ENCODE measurements at regions of chr4 and their contacts with region 1.

Region 1: GRCh38 chr4:164779811-164780216 is 25.9 kb downstream of the SMIM31 start:
- DNase-seq: peak; percentile 25
- H3K4me3 Mint-ChIP-seq: no peak overlapping the region
- H3K27ac Mint-ChIP-seq: no peak overlapping the region
- H3K4me1 Mint-ChIP-seq: no peaks in the 10 kb centered on the region
- H3K27me3 Mint-ChIP-seq: no peaks in the 10 kb centered on the region
- CTCF ChIP-seq: peak; percentile 53

Region 2: DNA sequence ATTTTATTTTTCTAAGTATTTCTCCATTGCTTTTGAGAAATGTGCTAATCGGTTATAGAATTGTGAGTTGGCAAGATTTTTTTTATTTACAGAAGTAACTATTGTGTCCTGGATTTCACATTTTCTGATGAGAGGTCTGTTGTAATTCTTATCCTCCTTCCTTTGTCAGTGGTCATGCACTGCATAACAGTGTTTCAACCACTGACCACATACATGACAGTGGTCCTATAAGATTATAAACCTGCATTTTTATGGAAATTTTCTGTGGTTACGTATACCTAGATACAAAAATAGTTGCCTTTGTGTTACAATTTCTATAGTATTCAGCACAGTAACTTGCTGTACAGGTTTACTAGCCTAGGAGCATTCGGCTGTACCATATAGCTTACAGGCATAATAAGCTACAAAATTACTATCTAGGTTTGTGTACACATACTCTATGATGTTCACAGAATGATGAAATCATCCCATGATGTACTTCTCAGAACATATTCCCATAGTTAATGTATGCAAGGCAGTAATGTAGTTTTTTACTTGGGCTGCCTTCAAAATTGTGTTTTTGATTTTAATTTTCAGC is 144.9 kb after region 1 on chr4:
- CTCF ChIA-PET with region 1: no interaction called
- intact Hi-C with region 1: no loop called
- DNase-seq: no peak
- H3K4me3 Mint-ChIP-seq: no peak overlapping the region
- H3K27ac Mint-ChIP-seq: no peak overlapping the region
- H3K4me1 Mint-ChIP-seq: no peaks in the 10 kb centered on the region
- H3K27me3 Mint-ChIP-seq: no peaks in the 10 kb centered on the region
- CTCF ChIP-seq: no peak

Region 3: GRCh38 chr4:164937576-164938270 is 157.9 kb after region 1 on chr4:
- CTCF ChIA-PET with region 1: no interaction called
- intact Hi-C with region 1: loop called (anchors 10 kb)
- DNase-seq: no peak
- H3K4me3 Mint-ChIP-seq: no peak overlapping the region
- H3K27ac Mint-ChIP-seq: no peak overlapping the region
- H3K4me1 Mint-ChIP-seq: no peaks in the 10 kb centered on the region
- H3K27me3 Mint-ChIP-seq: no peaks in the 10 kb centered on the region
- CTCF ChIP-seq: no peak

Region 4: DNA sequence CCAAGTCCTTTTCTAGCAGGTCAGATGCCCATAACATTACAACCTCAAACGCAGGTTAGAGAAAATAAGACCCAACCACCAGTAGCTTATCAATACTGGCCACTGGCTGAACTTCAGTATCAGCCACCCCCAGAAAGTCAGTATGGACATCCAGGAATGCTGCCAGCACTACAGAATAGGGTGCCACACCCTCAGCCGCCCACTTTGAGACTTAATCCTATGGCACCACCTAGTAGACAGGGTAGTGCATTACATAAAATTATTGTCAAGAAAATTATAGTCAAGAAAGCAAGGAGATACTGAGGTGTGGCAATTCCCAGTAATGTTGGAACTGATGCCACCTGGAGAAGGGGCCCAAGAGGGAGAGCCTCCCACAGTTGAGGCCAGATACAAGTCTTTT is 217.5 kb after region 1 on chr4:
- CTCF ChIA-PET with region 1: no interaction called
- intact Hi-C with region 1: loop called (anchors 1 kb)
- DNase-seq: peak; percentile 15
- H3K4me3 Mint-ChIP-seq: no peak overlapping the region
- H3K27ac Mint-ChIP-seq: no peak overlapping the region
- H3K4me1 Mint-ChIP-seq: no peaks in the 10 kb centered on the region
- H3K27me3 Mint-ChIP-seq: no peaks in the 10 kb centered on the region
- CTCF ChIP-seq: peak; percentile 20

Region 5: DNA sequence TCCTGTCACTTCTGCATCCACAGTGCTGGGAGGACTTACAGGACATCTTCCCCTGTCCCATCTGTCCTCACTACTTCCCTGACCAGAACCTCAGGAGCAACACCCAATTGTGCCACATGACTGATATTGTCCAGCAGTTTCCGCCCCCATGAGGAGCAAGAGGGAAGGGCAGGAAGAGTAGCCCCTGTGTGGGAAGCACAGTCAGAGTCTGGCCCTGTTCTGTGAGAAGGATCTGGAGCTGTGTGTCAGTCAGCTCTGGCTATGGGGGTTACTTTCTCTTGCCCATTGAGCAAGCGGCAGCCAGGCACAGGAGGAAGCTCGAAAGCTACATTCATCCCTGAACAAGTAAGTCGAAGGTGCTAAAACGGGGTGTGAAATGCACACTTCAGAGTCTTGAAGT is 237.2 kb after region 1 on chr4:
- CTCF ChIA-PET with region 1: no interaction called
- intact Hi-C with region 1: no loop called
- DNase-seq: no peak
- H3K4me3 Mint-ChIP-seq: no peak overlapping the region
- H3K27ac Mint-ChIP-seq: no peak overlapping the region
- H3K4me1 Mint-ChIP-seq: no peaks in the 10 kb centered on the region
- H3K27me3 Mint-ChIP-seq: no peaks in the 10 kb centered on the region
- CTCF ChIP-seq: no peak

Region 6: GRCh38 chr4:165096776-165097175 is 317.0 kb after region 1 on chr4:
- CTCF ChIA-PET with region 1: no interaction called
- intact Hi-C with region 1: loop called (anchors 5 kb)
- DNase-seq: no peak
- H3K4me3 Mint-ChIP-seq: no peak overlapping the region
- H3K27ac Mint-ChIP-seq: no peak overlapping the region
- H3K4me1 Mint-ChIP-seq: no peaks in the 10 kb centered on the region
- H3K27me3 Mint-ChIP-seq: no peaks in the 10 kb centered on the region
- CTCF ChIP-seq: no peak

Region 7: GRCh38 chr4:165464813-165465381 is 685.1 kb after region 1 on chr4:
- CTCF ChIA-PET with region 1: no interaction called
- intact Hi-C with region 1: loop called (anchors 10 kb)
- DNase-seq: no peak
- H3K4me3 Mint-ChIP-seq: no peak overlapping the region
- H3K27ac Mint-ChIP-seq: no peak overlapping the region
- H3K4me1 Mint-ChIP-seq: no peaks in the 10 kb centered on the region
- H3K27me3 Mint-ChIP-seq: no peaks in the 10 kb centered on the region
- CTCF ChIP-seq: peak; percentile 17